Right ventricle myocardium inferior (tissue), 1 donor: ENCODE measurements at regions of chr11 and their contacts with region 1.

Region 1: DNA sequence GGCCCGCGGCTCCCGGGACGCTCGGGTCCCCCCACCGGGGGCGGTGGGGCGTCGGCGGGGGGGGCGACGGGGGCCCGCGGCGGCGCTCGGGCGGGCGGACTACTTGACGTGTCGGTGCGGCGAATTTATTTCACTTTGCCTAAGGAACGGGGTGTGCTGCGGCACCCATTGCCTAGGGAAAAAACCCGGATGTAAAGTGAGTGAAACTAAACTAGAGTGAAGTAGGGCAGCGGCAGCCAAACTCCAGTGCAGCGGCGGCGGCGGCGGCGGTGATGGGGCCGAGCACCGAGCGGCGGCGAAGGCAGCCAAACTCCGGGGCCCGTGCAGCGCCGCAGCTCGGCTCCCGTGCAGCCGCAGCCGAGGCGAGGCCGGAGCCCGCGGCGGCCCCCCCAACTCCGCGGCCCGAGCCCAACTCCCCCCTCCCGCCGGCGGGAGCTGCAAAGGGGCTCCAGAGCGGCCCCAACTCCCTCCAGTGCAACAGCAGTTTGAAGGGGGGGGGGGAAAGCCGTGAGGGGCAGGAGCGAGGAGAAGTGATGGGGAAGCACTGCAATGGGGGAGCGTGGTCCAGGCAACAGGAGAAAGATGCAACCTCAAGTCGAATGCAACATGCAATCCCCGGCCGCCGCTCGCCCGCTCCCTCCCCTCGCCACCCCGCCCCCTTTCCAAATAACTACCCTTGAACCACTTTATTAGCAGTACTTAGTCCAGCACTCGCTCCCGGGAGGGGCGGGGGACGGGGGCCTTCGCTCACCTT is 647 bp upstream of the PHF21A start:
- DNase-seq: peak; percentile 90
- ATAC-seq: peak; percentile 33

Region 2: GRCh38 chr11:45655347-45655756 is 466.5 kb before region 1 on chr11:
- intact Hi-C with region 1: no loop called
- DNase-seq: peak; percentile 83
- ATAC-seq: peak; percentile 68

Region 3: DNA sequence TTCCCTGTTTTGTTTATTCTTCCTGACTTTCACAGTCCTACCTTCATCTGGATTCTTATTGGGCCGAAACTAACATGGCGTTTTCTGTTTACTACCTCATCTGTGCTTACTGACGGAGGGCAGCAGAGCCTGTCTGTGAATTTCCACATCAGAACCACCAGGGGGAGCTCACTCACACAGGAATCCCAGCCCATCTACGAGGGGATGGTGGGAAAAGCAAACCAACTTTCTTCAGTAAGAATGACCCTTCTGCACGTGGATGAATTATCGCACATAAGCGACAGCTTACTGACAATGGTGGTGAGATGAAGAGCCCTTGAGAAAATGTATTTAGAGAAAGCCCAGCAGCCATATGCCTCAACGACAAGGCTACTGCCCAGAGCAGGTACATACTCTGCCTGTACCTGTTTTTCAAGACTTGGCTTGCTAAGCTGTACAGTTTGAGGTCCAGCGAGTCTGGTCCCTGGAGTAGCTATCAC is 157.0 kb before region 1 on chr11:
- intact Hi-C with region 1: loop called (anchors 10 kb)
- DNase-seq: no peak
- ATAC-seq: peak; percentile 79

Region 4: GRCh38 chr11:46006418-46007070 is 115.4 kb before region 1 on chr11:
- intact Hi-C with region 1: no loop called
- DNase-seq: no peak
- ATAC-seq: peak; percentile 72

Region 5: GRCh38 chr11:46072172-46072964 is 49.5 kb before region 1 on chr11:
- intact Hi-C with region 1: loop called (anchors 5 kb)
- DNase-seq: no peak
- ATAC-seq: peak; percentile 63

Region 6: DNA sequence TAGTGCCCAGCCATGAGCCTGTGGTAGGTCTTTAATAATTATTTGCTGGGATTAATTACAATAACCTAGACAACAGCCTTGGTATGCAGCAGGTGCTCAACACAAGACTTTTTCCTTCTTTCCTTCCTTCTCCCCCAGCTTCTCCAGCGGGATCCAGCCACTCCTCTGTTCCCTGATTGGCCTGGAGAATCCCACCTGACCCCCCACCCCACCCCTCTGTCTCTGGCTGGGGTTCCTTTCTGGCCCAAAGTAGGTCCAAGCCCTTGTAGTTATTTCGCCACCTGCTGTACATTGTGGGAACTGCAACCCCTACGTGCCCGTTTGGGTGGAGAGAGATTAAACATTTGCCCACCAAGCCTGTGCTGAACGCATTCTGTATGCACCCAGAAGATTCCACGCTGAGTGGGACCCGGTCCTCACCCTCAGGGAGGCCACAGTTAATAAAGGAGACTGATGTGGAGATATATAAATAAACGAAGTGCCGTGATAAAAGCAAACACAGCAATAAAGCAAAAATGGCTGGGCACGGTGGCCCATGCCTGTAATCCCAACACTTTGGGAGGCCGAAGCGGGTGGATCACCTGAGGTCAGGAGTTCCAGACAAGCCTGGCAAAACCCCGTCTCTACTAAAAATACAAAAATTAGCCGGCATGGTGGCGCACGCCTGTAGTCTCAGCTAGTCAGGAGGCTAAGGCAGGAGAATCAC is 193.3 kb after region 1 on chr11:
- intact Hi-C with region 1: loop called (anchors 10 kb)
- DNase-seq: no peak
- ATAC-seq: peak; percentile 39